Right cardiac atrium (tissue), 5 donors: ENCODE measurements at regions of chr11 and their contacts with region 1.

Region 1: DNA sequence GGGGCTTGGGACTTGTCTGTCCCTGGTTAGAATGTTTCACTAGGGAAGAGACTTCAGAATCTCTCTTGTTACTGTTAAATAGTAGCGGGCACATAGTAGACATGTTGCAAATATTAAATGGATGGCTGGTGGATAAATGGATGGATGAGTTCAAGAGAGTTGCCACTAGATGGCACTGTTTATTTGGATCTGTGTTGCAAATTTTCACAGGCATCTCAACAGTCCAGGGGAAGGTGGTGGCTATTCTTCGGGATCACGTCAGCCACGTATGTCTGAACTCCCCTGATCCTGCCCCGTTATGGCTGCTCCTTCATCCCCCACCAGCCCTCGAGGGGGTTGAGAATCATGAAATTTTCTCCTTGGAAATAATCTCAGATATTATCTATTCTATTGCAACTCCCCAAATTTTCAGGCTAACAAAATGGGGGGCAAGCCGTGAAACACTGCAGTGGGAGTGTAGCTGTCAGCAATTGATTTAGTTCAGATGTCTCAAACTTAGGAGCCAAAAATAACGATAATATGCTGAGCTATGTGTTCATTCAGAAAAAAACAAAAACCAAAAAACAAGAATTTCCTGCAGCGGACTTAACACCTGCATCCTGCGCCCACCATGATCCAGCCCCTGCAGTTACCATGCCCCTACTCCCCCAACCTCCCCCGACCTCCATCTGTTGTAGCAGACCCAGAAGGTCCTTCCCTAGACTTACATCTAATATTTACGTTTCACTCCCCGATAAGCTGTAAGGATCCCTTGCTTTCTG is 29.1 kb upstream of the BIRC3 start:
- DNase-seq: peak in 1 of 3 donors; percentile 56
- ATAC-seq: peak; percentile 88 to 90
- H3K4me3 ChIP-seq: peak overlapping the region; percentile 31
- H3K27ac ChIP-seq: no peak overlapping the region
- H3K4me1 ChIP-seq: no peaks in the 10 kb centered on the region
- H3K27me3 ChIP-seq: no peaks in the 10 kb centered on the region

Region 2: DNA sequence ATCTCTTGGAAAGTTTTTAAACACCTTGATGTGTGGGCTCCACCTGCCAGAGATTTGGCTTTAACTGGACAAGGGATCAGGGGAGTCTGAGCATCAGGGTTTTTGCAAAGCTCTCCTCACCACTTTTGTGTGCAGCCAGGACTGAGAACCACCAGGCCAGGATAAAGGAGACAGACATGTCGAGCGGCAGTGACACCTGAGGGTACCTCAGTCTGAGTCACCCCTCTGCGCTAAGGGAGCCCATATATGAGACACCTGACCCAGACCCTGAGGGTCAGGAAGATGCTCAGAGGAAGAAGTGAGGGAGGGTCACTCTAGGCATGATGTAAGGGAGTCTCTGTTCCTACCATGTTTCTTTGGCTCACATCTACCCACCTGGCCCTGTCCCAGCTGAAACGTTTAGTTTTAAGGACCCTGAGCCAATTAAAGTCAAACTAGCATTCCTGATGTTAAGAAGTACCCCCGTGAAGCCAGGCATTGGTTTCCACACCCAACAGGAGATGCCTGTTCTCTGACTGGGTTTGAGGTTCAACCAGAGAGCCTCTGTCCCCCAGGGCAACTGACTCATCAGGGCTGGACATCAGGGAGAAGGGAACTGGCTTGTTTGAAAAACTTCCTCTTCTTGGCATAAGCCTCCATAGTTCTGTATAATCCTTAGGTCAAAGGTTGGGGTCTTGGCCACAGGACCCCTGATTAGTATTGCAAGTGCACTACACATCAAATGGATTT is 43.3 kb before region 1 on chr11:
- intact Hi-C with region 1: no loop called
- DNase-seq: no peak
- ATAC-seq: peak in 1 of 2 donors; percentile 33
- H3K4me3 ChIP-seq: no peak overlapping the region
- H3K27ac ChIP-seq: no peak overlapping the region
- H3K4me1 ChIP-seq: peaks cover 3% of the 10 kb centered on the region
- H3K27me3 ChIP-seq: no peaks in the 10 kb centered on the region

Region 3: GRCh38 chr11:102614485-102614884 is 326.3 kb after region 1 on chr11:
- intact Hi-C with region 1: loop called in 1 of 4 experiments (anchors 5 kb)
- DNase-seq: no peak
- ATAC-seq: no peak
- H3K4me3 ChIP-seq: no peak overlapping the region
- H3K27ac ChIP-seq: no peak overlapping the region
- H3K4me1 ChIP-seq: no peaks in the 10 kb centered on the region
- H3K27me3 ChIP-seq: no peaks in the 10 kb centered on the region